Dorsolateral prefrontal cortex (tissue), 120 donors: ENCODE measurements at regions of chr9 and their contacts with region 1.

Region 1: GRCh38 chr9:89359751-89360261 is 41.5 kb downstream of the SECISBP2 start:
- DNase-seq: peak in 1 of 10 donors; percentile 40
- H3K4me3 ChIP-seq: no peak overlapping the region
- H3K27ac ChIP-seq: peak overlapping the region; percentile 6 to 93 (median 78)
- H3K27me3 ChIP-seq: no peaks in the 10 kb centered on the region
- CTCF ChIP-seq: no peak

Region 2: DNA sequence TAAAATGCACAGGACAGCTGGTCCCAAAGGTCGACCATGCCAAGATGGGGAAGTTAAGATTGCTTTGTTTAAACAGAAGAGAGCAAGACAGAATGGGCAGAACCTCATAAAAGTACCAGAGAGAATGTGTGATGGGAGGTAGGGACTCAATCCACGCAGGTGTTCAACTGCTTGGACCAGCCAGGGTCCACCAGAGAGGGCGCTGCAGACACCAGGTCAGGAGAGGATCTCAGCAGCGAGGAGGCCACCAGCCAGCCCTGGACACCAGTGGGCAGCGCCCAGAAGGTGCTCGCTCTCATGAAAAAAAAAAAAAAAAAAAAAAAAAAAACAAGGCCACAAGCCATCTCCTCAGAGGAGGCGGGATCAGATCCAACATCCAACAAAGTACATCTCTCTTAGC is 263.0 kb before region 1 on chr9:
- intact Hi-C with region 1: no loop called
- DNase-seq: no peak
- H3K4me3 ChIP-seq: no peak overlapping the region
- H3K27ac ChIP-seq: peak overlapping the region in 6 of 59 donors; percentile 62 to 81 (median 70)
- H3K27me3 ChIP-seq: no peaks in the 10 kb centered on the region
- CTCF ChIP-seq: no peak

Region 3: DNA sequence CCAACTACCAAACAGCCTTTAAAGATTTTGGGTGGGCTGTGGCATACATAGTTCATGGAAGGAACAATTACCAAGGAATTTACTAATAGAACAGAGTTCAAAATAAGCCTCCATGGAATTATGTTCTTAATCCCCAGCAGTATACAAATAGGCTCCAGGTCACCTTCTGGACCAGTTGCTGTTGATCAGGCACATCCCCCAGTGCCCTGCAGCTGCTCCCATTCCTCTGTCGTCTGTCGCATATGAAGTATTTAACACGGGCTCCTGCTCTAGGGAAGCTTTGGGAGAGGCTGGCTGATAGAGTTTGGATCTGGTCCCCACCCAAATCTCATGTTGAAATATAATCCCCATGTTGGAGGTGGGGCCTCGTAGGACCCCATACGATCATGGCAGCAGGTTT is 199.0 kb before region 1 on chr9:
- intact Hi-C with region 1: no loop called
- DNase-seq: no peak
- H3K4me3 ChIP-seq: no peak overlapping the region
- H3K27ac ChIP-seq: no peak overlapping the region
- H3K27me3 ChIP-seq: no peaks in the 10 kb centered on the region
- CTCF ChIP-seq: no peak

Region 4: DNA sequence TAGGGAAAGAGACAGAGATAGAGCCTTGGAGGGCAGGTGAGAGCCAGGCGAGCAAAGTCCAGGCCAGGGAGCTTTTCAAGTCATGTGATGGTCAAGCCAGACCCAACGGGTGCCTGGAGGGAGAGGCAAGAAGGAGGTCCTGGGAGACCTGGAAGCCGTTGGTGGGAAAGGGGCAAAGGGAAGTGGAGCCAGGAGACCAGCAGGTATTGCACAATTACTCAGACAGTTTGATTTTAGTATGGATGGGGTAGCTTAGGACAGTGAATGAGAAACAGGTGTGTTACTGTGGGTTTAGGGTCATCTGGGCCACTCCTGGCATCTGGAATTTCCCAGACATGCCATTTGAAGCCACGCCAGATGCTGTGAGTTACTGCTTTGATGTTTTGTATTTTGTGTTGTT is 36.4 kb before region 1 on chr9:
- intact Hi-C with region 1: loop called (anchors 5 kb)
- DNase-seq: no peak
- H3K4me3 ChIP-seq: no peak overlapping the region
- H3K27ac ChIP-seq: no peak overlapping the region
- H3K27me3 ChIP-seq: no peaks in the 10 kb centered on the region
- CTCF ChIP-seq: no peak

Region 5: DNA sequence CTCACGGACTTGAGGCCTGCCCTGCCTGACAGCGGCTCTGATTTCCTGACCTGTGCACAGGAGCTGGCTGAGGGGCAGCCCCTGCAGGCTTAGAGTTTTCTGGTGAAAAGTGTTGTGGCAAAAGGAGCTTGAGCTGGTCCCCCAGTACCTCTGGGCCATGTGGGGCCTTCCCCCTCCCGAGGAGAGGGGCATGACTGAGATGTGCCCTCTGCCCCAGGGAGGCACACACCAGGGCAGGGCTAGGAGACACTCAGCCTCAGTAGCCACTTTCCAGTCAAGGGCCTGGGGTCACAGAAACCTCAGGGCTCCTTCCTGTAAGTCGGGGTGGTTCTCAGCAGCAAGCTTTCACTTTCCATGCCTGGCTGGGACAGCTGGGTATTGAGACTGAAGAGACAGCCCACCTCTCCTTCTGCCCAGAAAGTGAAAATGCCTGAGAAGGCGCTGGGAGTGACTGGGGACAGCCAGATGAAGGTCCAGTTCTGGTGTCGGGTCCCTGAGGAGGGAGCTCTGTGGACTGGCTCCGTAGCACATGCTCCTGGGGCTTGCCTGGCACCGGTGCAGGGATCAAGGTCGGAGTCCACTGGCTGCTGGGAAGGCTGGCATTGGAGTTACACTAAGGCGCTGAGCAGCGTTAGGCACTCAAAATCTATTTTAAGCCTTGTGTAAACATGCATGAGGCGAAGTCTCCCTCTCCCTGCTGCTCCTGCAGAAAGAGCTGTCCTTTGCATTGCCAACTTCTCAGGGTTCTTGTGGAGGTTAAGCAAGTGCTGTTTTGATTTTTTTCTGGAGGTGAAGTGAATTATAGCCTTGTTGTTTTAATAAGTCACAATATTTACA is 639.9 kb after region 1 on chr9:
- intact Hi-C with region 1: no loop called
- DNase-seq: peak in 2 of 10 donors; percentile 22 to 66
- H3K4me3 ChIP-seq: peak overlapping the region in 38 of 59 donors; percentile 0 to 47 (median 29)
- H3K27ac ChIP-seq: peak overlapping the region in 55 of 59 donors; percentile 2 to 86 (median 66)
- H3K27me3 ChIP-seq: no peaks in the 10 kb centered on the region
- CTCF ChIP-seq: peak in 1 of 56 donors; percentile 21